Right ventricle myocardium superior (tissue), 1 donor: ENCODE measurements at regions of chr10 and their contacts with region 1.

Region 1: GRCh38 chr10:18214691-18215563 is 74.7 kb downstream of the CACNB2 start:
- DNase-seq: no peak
- ATAC-seq: peak; percentile 77

Region 2: GRCh38 chr10:17847585-17848296 is 367.2 kb before region 1 on chr10:
- intact Hi-C with region 1: loop called (anchors 5 kb)
- DNase-seq: no peak
- ATAC-seq: peak; percentile 49

Region 3: GRCh38 chr10:17910125-17910789 is 304.7 kb before region 1 on chr10:
- intact Hi-C with region 1: loop called (anchors 5 kb)
- DNase-seq: no peak
- ATAC-seq: peak; percentile 25

Region 4: GRCh38 chr10:18140149-18140956 is 74.6 kb before region 1 on chr10 and contains the start of gene CACNB2:
- intact Hi-C with region 1: loop called (anchors 5 kb)
- DNase-seq: peak; percentile 82
- ATAC-seq: peak; percentile 74
- total RNA-seq, gene CACNB2: 45.7 TPM